Aorta (tissue), 5 donors: ENCODE measurements at regions of chr1 and their contacts with region 1.

Region 1: DNA sequence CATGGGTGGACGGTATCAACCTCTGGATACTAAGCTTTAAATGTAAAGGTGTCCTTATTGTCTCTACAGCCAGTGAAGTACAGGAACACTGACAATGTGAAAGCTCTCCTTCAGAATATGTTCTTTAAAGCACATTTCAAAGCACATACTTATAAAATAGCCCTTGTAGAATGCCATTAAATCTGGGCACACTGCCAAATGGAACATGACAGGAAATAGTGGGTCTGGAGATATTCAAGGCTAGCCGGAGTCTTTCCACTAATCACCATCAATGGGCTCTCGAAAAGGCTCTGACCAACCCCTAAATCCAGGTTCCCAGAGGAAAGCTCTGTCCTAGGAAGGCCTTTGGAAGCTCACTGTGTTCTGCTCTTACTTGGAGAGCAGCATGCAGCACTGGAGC is 46.6 kb downstream of the PLD5 start:
- DNase-seq: no peak
- ATAC-seq: no peak
- H3K4me3 ChIP-seq: no peak overlapping the region
- H3K27ac ChIP-seq: no peak overlapping the region
- H3K4me1 ChIP-seq: no peaks in the 10 kb centered on the region
- H3K27me3 ChIP-seq: no peaks in the 10 kb centered on the region

Region 2: DNA sequence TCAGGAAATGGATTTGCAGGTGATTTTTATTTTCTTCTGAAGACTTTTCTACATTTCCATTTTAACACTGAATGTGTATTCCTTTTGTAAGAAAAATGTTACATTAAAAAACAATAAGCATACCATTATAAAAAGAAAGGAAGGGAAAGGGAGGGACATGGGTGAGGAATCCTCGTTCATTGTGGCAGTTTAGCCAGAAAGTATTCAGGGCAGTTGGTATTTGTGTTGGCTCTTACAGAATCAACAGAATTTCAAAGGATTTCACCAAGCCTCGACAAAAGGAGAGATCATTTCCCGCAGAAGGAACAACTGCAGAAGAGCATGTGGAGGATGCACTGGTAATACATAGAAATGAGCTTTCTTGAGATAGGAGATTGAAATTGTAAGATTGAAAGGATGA is 11.6 kb after region 1 on chr1:
- intact Hi-C with region 1: loop called in 1 of 2 experiments (anchors 1 kb)
- DNase-seq: no peak
- ATAC-seq: no peak
- H3K4me3 ChIP-seq: no peak overlapping the region
- H3K27ac ChIP-seq: peak overlapping the region in 1 of 2 donors; percentile 14
- H3K4me1 ChIP-seq: peaks cover 0 to 2% of the 10 kb centered on the region in 2 donors
- H3K27me3 ChIP-seq: no peaks in the 10 kb centered on the region

Region 3: GRCh38 chr1:242523719-242524570 is 46.0 kb after region 1 on chr1:
- intact Hi-C with region 1: loop called in 1 of 2 experiments (anchors 10 kb)
- DNase-seq: peak; percentile 51 to 88
- ATAC-seq: peak; percentile 84
- H3K4me3 ChIP-seq: peak overlapping the region; percentile 72 to 74
- H3K27ac ChIP-seq: no peak overlapping the region
- H3K4me1 ChIP-seq: peaks cover 0 to 1% of the 10 kb centered on the region in 2 donors
- H3K27me3 ChIP-seq: no peaks in the 10 kb centered on the region